ENCODE measurements at regions of chr11 and their contacts with region 1.

Region 1: DNA sequence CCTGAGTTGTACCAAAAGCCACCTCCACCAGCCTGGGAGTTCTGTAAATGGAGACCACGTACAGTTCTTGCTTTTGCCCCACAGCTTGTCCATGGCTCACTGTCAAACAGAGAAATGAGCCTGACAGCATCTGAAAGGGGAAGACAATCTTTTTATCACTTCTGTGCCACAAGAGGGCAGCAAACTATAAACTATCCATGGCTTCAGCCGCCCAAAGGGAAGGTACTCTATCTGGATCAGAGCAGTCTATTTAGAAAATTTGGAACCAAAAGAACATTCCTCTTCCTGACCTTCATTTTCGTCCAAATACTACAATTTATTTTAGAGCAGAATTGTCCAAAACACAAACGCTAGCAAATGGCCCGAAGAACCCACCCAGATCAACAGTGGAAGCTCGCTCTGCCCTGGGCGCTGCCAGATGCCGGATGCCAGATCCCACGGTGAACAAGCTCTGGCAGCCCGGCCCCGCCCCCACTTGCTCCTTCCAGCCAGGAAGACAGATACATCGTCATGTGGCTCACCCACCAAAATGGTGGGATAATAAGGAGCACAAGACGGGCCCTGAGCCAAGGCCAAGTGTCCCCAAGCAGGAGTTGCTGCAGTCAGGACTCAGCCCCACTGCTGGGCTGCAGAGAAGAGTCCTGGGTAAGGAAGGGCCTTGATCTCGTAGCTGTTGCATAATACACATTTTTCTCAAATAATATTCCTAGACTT is 23.9 kb upstream of the SCGB1A1 start:
- DNase-seq: peak; percentile 93
- ATAC-seq: peak; percentile 81
- H3K4me3 ChIP-seq: peak overlapping the region; percentile 64
- H3K27ac ChIP-seq: no peak overlapping the region
- H3K4me1 ChIP-seq: peaks cover 17% of the 10 kb centered on the region
- H3K27me3 ChIP-seq: no peaks in the 10 kb centered on the region
- CTCF ChIP-seq: peak; percentile 96

Region 2: DNA sequence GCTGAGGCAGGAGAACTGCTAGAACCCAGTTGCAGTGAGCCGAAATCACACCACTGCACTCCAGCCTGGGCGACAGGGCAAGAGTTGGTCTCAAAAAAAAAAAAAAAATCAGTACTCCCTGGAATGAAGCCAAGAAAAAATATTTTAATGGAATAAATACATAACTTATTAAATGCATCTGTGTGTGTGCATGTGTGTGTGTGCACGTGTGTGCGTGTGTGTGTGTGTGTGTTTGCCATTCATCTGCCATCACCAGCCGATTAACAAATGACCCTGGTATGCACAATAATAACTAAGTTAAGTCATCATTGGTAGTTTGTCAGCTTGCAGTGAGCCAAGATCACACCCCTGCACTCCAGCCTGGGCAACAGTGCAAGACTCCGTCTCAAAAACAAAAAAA is 11.2 kb before region 1 on chr11:
- CTCF ChIA-PET with region 1: interaction called, 3 read pairs
- POLR2A ChIA-PET with region 1: no interaction called
- intact Hi-C with region 1: loop called (anchors 1 kb)
- DNase-seq: no peak
- ATAC-seq: no peak
- H3K4me3 ChIP-seq: no peak overlapping the region
- H3K27ac ChIP-seq: no peak overlapping the region
- H3K4me1 ChIP-seq: peaks cover 6% of the 10 kb centered on the region; the same call in 1 of the 2 replicates
- H3K27me3 ChIP-seq: no peaks in the 10 kb centered on the region
- CTCF ChIP-seq: no peak

Region 3: DNA sequence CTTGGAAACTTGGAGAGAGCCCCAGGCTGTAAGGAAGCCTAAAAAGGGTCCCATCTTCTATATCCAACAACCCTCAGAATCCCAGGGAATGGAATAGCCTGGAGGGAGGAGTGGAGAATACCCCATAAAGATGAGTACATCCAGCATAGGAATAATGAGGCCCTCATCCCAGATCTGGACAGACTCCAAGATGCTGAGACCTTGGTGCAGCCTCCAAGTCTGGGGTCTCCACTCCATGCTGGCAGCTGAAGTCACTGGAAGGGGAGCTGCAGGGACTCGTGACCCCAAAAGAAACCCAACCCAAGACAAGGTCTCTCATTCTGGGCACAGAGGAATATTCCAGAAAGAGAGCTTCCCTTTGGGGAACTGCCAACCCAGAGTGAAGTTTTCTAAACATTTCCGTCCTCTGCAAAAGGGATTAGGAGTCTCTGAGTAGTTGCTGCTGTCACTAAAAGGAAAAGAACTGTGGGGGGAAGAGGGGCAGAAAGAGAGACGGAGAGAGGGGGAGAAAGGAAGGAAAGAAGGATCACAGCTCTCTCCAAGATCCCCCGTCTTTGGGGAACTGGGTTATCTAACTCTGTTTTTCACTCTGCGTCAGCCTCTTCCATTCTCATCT is 24.4 kb after region 1 on chr11:
- CTCF ChIA-PET with region 1: interaction called, 15 read pairs
- POLR2A ChIA-PET with region 1: interaction called, 9 read pairs
- intact Hi-C with region 1: no loop called
- DNase-seq: no peak
- ATAC-seq: no peak
- H3K4me3 ChIP-seq: no peak overlapping the region
- H3K27ac ChIP-seq: no peak overlapping the region
- H3K4me1 ChIP-seq: no peaks in the 10 kb centered on the region
- H3K27me3 ChIP-seq: no peaks in the 10 kb centered on the region
- CTCF ChIP-seq: no peak

Region 4: GRCh38 chr11:62497132-62497915 is 102.3 kb after region 1 on chr11:
- CTCF ChIA-PET with region 1: interaction called, 7 read pairs
- POLR2A ChIA-PET with region 1: no interaction called
- intact Hi-C with region 1: loop called (anchors 1 kb)
- DNase-seq: peak; percentile 87
- ATAC-seq: peak; percentile 85
- H3K4me3 ChIP-seq: no peak overlapping the region
- H3K27ac ChIP-seq: peak overlapping the region; percentile 26
- H3K4me1 ChIP-seq: peaks cover 34% of the 10 kb centered on the region
- H3K27me3 ChIP-seq: no peaks in the 10 kb centered on the region
- CTCF ChIP-seq: peak; percentile 93

Region 5: GRCh38 chr11:62694455-62695167 is 299.6 kb after region 1 on chr11:
- CTCF ChIA-PET with region 1: no interaction called
- POLR2A ChIA-PET with region 1: no interaction called
- intact Hi-C with region 1: loop called (anchors 10 kb)
- DNase-seq: peak; percentile 80
- ATAC-seq: peak; percentile 95
- H3K4me3 ChIP-seq: no peak overlapping the region
- H3K27ac ChIP-seq: no peak overlapping the region
- H3K4me1 ChIP-seq: no peaks in the 10 kb centered on the region
- H3K27me3 ChIP-seq: no peaks in the 10 kb centered on the region
- CTCF ChIP-seq: peak; percentile 95

Measured in PC-3 (cell line).